ENCODE measurements at regions of chr4 and their contacts with region 1.

Region 1: DNA sequence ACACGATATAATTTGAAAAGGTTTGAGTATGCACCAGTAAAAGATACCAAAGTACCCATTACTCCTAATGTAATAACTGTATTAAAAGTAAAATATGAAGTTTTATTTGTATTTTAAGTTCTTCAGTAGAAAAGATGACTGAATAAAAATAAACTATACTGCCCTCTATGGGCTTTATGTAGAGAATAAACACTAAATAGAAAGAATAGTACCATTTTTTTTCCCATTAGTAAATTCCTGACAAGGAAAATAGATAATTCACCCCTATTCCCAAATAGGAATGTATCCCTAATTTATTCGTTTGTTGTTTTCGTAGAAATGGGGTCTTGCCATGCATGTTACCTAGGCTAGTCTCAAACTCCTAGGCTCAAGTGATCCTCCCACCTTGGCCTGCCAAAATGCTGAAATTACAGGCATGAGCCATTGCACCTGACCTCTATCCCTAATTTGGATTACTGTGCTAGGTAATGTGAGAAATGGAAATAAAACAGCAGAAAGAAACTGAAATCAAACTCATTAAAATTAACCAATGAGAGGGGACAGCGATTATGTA is 73.6 kb upstream of the COX18 start:
- DNase-seq: no peak
- H3K4me3 ChIP-seq: no peak overlapping the region
- H3K27ac ChIP-seq: no peak overlapping the region
- H3K4me1 ChIP-seq: no peaks in the 10 kb centered on the region
- H3K27me3 ChIP-seq: no peaks in the 10 kb centered on the region
- CTCF ChIP-seq: peak; percentile 44; the same call in 1 of the 2 replicates

Region 2: GRCh38 chr4:73099143-73099542 is 43.9 kb before region 1 on chr4:
- CTCF ChIA-PET with region 1: no interaction called
- POLR2A ChIA-PET with region 1: no interaction called
- intact Hi-C with region 1: loop called (anchors 10 kb)
- DNase-seq: no peak
- H3K4me3 ChIP-seq: no peak overlapping the region
- H3K27ac ChIP-seq: no peak overlapping the region
- H3K4me1 ChIP-seq: no peaks in the 10 kb centered on the region
- H3K27me3 ChIP-seq: no peaks in the 10 kb centered on the region
- CTCF ChIP-seq: no peak

Region 3: GRCh38 chr4:73311428-73311827 is 168.4 kb after region 1 on chr4:
- CTCF ChIA-PET with region 1: no interaction called
- POLR2A ChIA-PET with region 1: no interaction called
- intact Hi-C with region 1: loop called (anchors 5 kb)
- DNase-seq: no peak
- H3K4me3 ChIP-seq: no peak overlapping the region
- H3K27ac ChIP-seq: no peak overlapping the region
- H3K4me1 ChIP-seq: no peaks in the 10 kb centered on the region; the same call in 1 of the 2 replicates
- H3K27me3 ChIP-seq: no peaks in the 10 kb centered on the region
- CTCF ChIP-seq: peak; percentile 54